Activated CD4-positive, alpha-beta T cell treated with anti-CD3 and anti-CD28 coated beads for 36 hours (primary cell): ENCODE measurements at regions of chr11 and their contacts with region 1.

Region 1: DNA sequence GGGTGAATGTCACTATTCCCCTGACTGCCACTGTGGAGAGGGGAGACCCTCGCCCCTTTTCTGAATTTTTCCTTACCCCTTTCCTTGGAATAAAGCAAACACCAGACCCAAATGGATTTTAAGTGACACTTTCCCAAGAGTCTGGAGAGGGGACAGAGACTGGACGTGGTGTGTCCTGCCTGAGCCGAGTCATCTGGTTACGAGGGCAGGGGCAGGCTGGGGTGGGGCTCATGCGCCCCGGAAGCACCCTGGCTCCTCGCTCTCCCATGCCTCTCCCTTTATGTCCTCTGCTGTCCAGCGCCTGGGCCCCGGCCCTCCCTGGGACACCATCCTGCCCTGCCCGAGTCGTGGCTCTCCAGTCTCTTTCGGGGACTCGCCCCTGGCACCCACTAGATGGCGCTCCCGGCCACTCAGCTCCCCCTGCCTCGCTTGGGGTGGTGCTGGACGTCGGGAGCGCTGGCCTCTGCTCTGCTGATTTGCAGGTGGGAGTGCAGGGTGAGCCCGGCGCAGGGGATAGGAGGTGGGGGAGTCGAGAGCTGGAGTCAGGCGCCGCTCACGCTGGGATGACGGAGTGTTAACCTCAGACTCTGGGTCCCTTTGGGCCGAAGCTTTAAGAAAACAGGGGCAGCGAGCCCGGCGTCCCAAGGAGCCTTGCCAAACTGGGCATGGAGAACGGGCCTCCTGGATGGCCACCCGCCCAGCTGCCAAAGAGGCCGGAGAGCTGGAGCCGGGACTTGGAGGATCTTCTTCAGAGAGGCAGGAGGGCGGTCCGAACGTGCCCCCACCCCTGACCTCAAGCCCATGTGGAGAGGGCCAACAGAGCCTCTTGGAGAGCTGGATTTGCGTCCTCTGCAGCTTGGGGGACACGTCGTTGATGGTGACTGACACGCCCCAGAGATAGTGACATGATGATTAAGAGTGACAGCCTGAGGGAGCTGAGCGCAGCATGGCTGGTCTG is 89.9 kb downstream of the RPS6KA4 start:
- DNase-seq: peak; percentile 88
- ATAC-seq: peak; percentile 84
- H3K4me3 Mint-ChIP-seq: peak overlapping the region; percentile 67
- H3K27ac Mint-ChIP-seq: no peak overlapping the region
- H3K4me1 Mint-ChIP-seq: peaks cover 15% of the 10 kb centered on the region
- H3K27me3 Mint-ChIP-seq: peaks cover 16% of the 10 kb centered on the region

Region 2: GRCh38 chr11:63974259-63975143 is 474.4 kb before region 1 on chr11 and contains the start of gene COX8A:
- CTCF ChIA-PET with region 1: no interaction called
- POLR2A ChIA-PET with region 1: no interaction called
- intact Hi-C with region 1: no loop called
- DNase-seq: peak; percentile 97
- ATAC-seq: peak; percentile 100
- H3K4me3 Mint-ChIP-seq: peak within 1 kb of the TSS; percentile 95
- H3K27ac Mint-ChIP-seq: peak within 1 kb of the TSS; percentile 97
- H3K4me1 Mint-ChIP-seq: peaks cover 20% of the 10 kb centered on the region
- H3K27me3 Mint-ChIP-seq: no peaks in the 10 kb centered on the region
- total RNA-seq, gene COX8A: 413 to 454 TPM

Region 3: GRCh38 chr11:64074239-64074638 is 374.6 kb before region 1 on chr11:
- CTCF ChIA-PET with region 1: no interaction called
- POLR2A ChIA-PET with region 1: no interaction called
- intact Hi-C with region 1: no loop called
- DNase-seq: peak; percentile 30
- ATAC-seq: peak; percentile 51
- H3K4me3 Mint-ChIP-seq: no peak overlapping the region
- H3K27ac Mint-ChIP-seq: no peak overlapping the region
- H3K4me1 Mint-ChIP-seq: peaks cover 3% of the 10 kb centered on the region
- H3K27me3 Mint-ChIP-seq: no peaks in the 10 kb centered on the region

Region 4: GRCh38 chr11:64419818-64420485 is 28.9 kb before region 1 on chr11:
- CTCF ChIA-PET with region 1: interaction called, 12 read pairs
- POLR2A ChIA-PET with region 1: no interaction called
- intact Hi-C with region 1: no loop called
- DNase-seq: no peak
- ATAC-seq: no peak
- H3K4me3 Mint-ChIP-seq: no peak overlapping the region
- H3K27ac Mint-ChIP-seq: no peak overlapping the region
- H3K4me1 Mint-ChIP-seq: peaks cover 4% of the 10 kb centered on the region
- H3K27me3 Mint-ChIP-seq: no peaks in the 10 kb centered on the region

Region 5: GRCh38 chr11:64436000-64436399 is 12.9 kb before region 1 on chr11:
- CTCF ChIA-PET with region 1: interaction called, 24 read pairs
- POLR2A ChIA-PET with region 1: no interaction called
- intact Hi-C with region 1: no loop called
- DNase-seq: no peak
- ATAC-seq: no peak
- H3K4me3 Mint-ChIP-seq: no peak overlapping the region
- H3K27ac Mint-ChIP-seq: no peak overlapping the region
- H3K4me1 Mint-ChIP-seq: no peaks in the 10 kb centered on the region
- H3K27me3 Mint-ChIP-seq: no peaks in the 10 kb centered on the region

Region 6: GRCh38 chr11:64466115-64466718 is 17.3 kb after region 1 on chr11:
- CTCF ChIA-PET with region 1: interaction called, 13 read pairs
- POLR2A ChIA-PET with region 1: no interaction called
- intact Hi-C with region 1: no loop called
- DNase-seq: no peak
- ATAC-seq: no peak
- H3K4me3 Mint-ChIP-seq: no peak overlapping the region
- H3K27ac Mint-ChIP-seq: no peak overlapping the region
- H3K4me1 Mint-ChIP-seq: peaks cover 5% of the 10 kb centered on the region
- H3K27me3 Mint-ChIP-seq: peaks cover 9% of the 10 kb centered on the region

Region 7: GRCh38 chr11:64516226-64516625 is 67.3 kb after region 1 on chr11:
- CTCF ChIA-PET with region 1: interaction called, 11 read pairs
- POLR2A ChIA-PET with region 1: no interaction called
- intact Hi-C with region 1: no loop called
- DNase-seq: peak; percentile 35
- ATAC-seq: no peak
- H3K4me3 Mint-ChIP-seq: no peak overlapping the region
- H3K27ac Mint-ChIP-seq: no peak overlapping the region
- H3K4me1 Mint-ChIP-seq: no peaks in the 10 kb centered on the region
- H3K27me3 Mint-ChIP-seq: peaks cover 8% of the 10 kb centered on the region

Region 8: DNA sequence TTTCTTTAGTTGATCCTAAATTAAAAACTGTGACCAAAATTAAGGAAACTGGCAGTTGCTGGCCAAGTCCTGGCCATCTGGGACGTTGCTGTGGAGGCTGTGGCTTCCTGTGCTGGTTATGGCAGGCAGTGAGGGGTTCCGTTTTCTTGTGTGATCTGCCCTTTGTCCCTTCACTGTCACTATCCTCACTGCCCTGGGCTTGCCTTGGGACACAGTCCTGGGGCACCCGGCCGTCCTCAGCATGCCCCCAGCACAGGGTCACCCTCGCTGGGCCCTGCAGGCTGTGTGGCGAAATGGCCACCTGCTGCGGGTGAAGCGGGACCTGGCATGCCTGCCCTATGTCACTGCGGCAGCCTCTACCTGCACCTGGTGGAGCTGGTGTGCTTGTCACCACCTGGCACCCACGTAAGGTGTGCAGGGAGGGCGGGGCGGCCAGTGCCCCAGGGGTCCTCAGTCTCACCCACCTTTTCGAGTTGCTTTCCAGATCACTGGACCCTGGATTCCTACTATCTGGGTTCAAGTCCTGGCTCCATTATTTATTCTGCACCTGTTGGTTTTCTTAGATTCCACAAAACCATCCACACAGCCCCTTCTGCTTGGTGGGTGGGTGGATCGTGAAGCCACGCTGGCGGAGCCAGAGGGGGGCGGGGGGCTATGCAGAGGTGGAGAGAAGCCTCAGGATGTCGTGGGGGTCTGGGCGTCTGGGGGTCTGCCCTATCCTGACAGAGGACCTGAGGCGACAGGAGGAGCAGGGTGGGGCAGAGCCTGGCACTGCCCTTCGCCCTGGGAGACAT is 89.8 kb after region 1 on chr11:
- CTCF ChIA-PET with region 1: no interaction called
- POLR2A ChIA-PET with region 1: no interaction called
- intact Hi-C with region 1: no loop called
- DNase-seq: no peak
- ATAC-seq: no peak
- H3K4me3 Mint-ChIP-seq: no peak overlapping the region
- H3K27ac Mint-ChIP-seq: no peak overlapping the region
- H3K4me1 Mint-ChIP-seq: no peaks in the 10 kb centered on the region
- H3K27me3 Mint-ChIP-seq: peaks cover 15% of the 10 kb centered on the region

Region 9: DNA sequence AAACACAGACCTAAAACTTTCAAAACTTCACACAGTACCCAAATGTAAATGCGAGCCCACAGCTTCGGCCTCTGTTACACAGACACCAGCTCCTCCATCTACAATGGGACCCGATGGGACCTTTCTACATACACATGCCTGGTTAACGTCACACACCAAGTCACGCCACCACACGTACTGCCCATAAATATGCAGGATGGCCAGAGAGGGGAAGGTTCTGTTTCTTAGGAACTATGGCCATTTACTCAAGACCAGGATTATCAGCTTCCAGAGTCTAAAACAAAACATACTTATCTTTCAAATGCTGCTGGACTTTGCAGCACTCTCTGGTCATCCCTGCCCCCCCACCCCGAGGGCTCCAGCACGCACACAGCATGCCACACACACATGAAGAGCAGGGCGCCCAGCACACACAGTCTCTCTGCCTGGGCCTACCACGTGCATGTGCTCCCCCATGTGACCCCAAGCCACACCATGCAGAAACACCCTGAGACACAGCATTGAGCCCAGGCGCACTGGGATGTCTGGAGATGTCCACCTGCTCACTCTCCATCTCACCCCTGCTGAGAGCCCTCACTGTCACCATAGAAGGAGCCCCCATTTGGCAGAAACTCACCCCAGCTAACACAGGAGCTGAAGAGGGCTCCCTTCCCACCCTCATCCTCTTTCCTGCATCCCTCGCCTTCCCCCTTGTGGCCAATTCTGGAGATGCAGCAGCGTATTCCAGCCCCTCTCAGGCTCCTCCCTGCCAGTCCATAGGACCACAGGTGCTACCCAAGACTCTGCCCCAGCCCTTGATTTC is 203.9 kb after region 1 on chr11:
- CTCF ChIA-PET with region 1: interaction called, 11 read pairs
- POLR2A ChIA-PET with region 1: no interaction called
- intact Hi-C with region 1: loop called (anchors 1 kb)
- DNase-seq: peak; percentile 87
- ATAC-seq: peak; percentile 75
- H3K4me3 Mint-ChIP-seq: no peak overlapping the region
- H3K27ac Mint-ChIP-seq: no peak overlapping the region
- H3K4me1 Mint-ChIP-seq: peaks cover 7% of the 10 kb centered on the region
- H3K27me3 Mint-ChIP-seq: peaks cover 3% of the 10 kb centered on the region

Region 10: GRCh38 chr11:65773784-65774411 is 1325.0 kb after region 1 on chr11:
- CTCF ChIA-PET with region 1: no interaction called
- POLR2A ChIA-PET with region 1: no interaction called
- intact Hi-C with region 1: no loop called
- DNase-seq: no peak
- ATAC-seq: peak; percentile 23
- H3K4me3 Mint-ChIP-seq: no peak overlapping the region
- H3K27ac Mint-ChIP-seq: peak overlapping the region; percentile 15
- H3K4me1 Mint-ChIP-seq: peaks cover 26% of the 10 kb centered on the region
- H3K27me3 Mint-ChIP-seq: no peaks in the 10 kb centered on the region